ENCODE measurements at regions of chr3 and their contacts with region 1.

Region 1: DNA sequence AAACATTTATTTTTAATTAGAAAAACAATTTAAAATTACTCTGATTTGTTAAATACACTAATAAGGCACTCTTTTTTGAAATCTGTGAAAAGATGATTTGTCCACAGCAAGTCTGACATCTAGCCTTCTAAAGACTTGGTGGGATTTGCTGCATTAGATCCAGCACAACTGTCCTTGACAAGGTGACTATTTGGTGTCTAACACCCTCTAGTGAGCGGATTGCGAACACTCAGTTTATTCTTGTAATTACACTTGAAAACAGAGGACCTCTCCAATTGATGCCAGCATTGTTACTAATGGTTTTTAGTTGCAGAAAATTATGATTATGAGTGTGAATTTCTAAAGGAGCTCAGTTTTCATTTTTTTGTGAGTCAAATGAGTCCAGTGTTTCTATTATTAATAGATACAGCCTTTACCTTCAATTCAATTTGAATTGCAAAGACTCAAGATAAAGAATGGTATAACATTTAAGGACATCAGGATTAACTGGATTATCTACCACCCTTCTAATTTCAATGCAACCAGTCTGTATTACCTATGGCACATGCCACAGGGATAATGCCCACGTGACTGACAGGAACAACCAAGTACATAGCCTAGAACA is 29.7 kb upstream of the STRIT1 start:
- DNase-seq: peak; percentile 83
- H3K4me3 Mint-ChIP-seq: no peak overlapping the region
- H3K27ac Mint-ChIP-seq: no peak overlapping the region
- H3K4me1 Mint-ChIP-seq: no peaks in the 10 kb centered on the region
- H3K27me3 Mint-ChIP-seq: no peaks in the 10 kb centered on the region
- CTCF ChIP-seq: peak; percentile 80

Region 2: DNA sequence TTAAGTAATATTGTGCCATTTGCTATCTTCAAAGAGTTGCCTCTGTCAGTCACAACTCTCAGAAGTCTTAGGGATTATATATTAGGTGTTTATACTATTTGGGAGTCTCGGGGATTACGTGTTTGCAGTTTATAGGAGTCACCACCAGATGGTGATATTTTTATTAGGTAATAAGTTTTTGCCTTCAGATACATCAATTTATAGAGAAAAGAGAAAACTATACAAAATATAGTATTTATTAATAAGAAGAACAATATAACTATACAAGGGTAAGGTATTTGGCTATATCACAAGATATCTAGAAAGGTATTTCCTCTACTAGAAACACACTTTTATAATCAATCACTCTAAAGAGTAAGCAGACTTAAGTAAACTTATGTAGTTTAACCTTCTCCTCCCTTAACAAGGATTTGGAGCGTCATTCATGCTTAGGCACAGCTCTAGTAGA is 988.2 kb before region 1 on chr3:
- CTCF ChIA-PET with region 1: no interaction called
- POLR2A ChIA-PET with region 1: no interaction called
- intact Hi-C with region 1: loop called (anchors 5 kb)
- DNase-seq: peak; percentile 50
- H3K4me3 Mint-ChIP-seq: no peak overlapping the region
- H3K27ac Mint-ChIP-seq: no peak overlapping the region
- H3K4me1 Mint-ChIP-seq: no peaks in the 10 kb centered on the region
- H3K27me3 Mint-ChIP-seq: no peaks in the 10 kb centered on the region
- CTCF ChIP-seq: peak; percentile 36

Region 3: GRCh38 chr3:154904328-154904727 is 418.8 kb before region 1 on chr3:
- CTCF ChIA-PET with region 1: interaction called, 8 read pairs
- POLR2A ChIA-PET with region 1: no interaction called
- intact Hi-C with region 1: loop called (anchors 1 kb)
- DNase-seq: peak; percentile 50
- H3K4me3 Mint-ChIP-seq: no peak overlapping the region
- H3K27ac Mint-ChIP-seq: peak overlapping the region; percentile 52
- H3K4me1 Mint-ChIP-seq: peaks cover 5% of the 10 kb centered on the region
- H3K27me3 Mint-ChIP-seq: no peaks in the 10 kb centered on the region
- CTCF ChIP-seq: peak; percentile 18

Region 4: GRCh38 chr3:154954753-154955152 is 368.4 kb before region 1 on chr3:
- CTCF ChIA-PET with region 1: interaction called, 87 read pairs
- POLR2A ChIA-PET with region 1: interaction called, 4 read pairs
- intact Hi-C with region 1: loop called (anchors 1 kb)
- DNase-seq: peak; percentile 70
- H3K4me3 Mint-ChIP-seq: no peak overlapping the region
- H3K27ac Mint-ChIP-seq: no peak overlapping the region
- H3K4me1 Mint-ChIP-seq: peaks cover 11% of the 10 kb centered on the region
- H3K27me3 Mint-ChIP-seq: no peaks in the 10 kb centered on the region
- CTCF ChIP-seq: peak; percentile 62

Region 5: DNA sequence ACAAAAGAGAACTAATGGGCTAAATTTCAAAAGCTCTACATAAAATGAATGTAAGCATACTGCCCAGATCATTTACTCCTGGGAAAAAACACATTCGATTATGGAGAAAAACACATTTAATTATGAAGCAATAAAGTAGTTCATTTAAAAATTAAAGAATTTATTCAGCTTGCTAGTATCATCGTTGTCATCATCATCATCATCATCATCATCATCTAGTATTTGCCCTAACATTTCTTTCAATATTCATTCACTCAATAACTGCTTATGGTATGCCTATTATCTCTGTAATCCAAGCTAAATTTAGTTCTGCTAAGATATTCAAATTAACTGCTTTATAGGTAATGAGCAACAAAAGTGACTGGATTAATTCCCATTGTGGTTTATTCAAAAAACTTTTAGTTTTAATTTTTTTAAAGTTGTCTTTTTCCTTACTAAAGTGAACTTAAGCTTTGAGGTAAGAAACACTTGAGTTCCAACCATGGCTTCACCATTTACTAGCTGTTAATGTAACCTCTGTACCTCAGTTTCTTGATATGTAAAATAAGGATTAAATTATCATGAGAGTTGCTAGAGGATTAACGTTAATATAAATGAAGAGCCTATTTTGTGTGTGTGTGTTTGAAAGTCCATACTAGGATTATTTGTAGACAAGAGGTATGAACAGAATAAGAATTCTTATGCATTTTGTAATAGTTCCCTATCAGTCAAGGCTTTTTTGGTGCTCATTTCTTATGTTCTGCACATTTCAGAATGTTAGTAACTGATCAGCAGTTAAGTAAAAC is 149.6 kb before region 1 on chr3:
- CTCF ChIA-PET with region 1: interaction called, 12 read pairs
- POLR2A ChIA-PET with region 1: no interaction called
- intact Hi-C with region 1: no loop called
- DNase-seq: no peak
- H3K4me3 Mint-ChIP-seq: no peak overlapping the region
- H3K27ac Mint-ChIP-seq: no peak overlapping the region
- H3K4me1 Mint-ChIP-seq: no peaks in the 10 kb centered on the region
- H3K27me3 Mint-ChIP-seq: no peaks in the 10 kb centered on the region
- CTCF ChIP-seq: no peak

Region 6: GRCh38 chr3:155411500-155412223 is 88.5 kb after region 1 on chr3:
- CTCF ChIA-PET with region 1: no interaction called
- POLR2A ChIA-PET with region 1: no interaction called
- intact Hi-C with region 1: no loop called
- DNase-seq: peak; percentile 36
- H3K4me3 Mint-ChIP-seq: no peak overlapping the region
- H3K27ac Mint-ChIP-seq: no peak overlapping the region
- H3K4me1 Mint-ChIP-seq: peaks cover 14% of the 10 kb centered on the region
- H3K27me3 Mint-ChIP-seq: no peaks in the 10 kb centered on the region
- CTCF ChIP-seq: no peak

Region 7: DNA sequence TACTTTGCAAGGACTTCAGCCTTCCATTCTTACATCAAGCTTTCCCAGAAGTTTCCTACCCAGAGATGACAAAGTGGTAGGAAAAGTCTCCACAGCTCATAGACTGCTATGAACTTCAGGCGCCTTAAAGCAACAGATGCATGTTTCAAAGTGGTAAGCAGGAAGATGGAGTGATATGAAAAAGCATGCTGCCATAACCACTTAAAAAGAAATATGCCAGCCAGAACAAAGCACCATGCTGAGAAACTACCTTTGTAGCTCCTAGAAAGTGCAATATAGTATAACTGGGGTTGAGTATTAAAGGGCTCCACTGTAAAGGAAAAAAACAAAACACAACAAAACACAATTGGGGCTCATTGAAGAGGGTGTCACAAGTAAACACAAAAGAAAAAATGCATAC is 162.7 kb after region 1 on chr3:
- CTCF ChIA-PET with region 1: no interaction called
- POLR2A ChIA-PET with region 1: no interaction called
- intact Hi-C with region 1: no loop called
- DNase-seq: no peak
- H3K4me3 Mint-ChIP-seq: no peak overlapping the region
- H3K27ac Mint-ChIP-seq: no peak overlapping the region
- H3K4me1 Mint-ChIP-seq: no peaks in the 10 kb centered on the region
- H3K27me3 Mint-ChIP-seq: no peaks in the 10 kb centered on the region
- CTCF ChIP-seq: no peak

Measured in MCF 10A (cell line).